Activated CD4-positive, alpha-beta T cell treated with anti-CD3 and anti-CD28 coated beads, Interleukin-2, amount 10 ng/mL, durations not matched to agents 24 days and 14 days (primary cell): ENCODE measurements at regions of chr15 and their contacts with region 1.

Region 1: GRCh38 chr15:64460206-64460734 is at the start of gene ZNF609:
- DNase-seq: peak; percentile 98
- H3K4me3 Mint-ChIP-seq: peak within 1 kb of the TSS; percentile 92
- H3K27ac Mint-ChIP-seq: peak within 1 kb of the TSS; percentile 90
- H3K4me1 Mint-ChIP-seq: peaks cover 60% of the 10 kb centered on the region
- H3K27me3 Mint-ChIP-seq: no peaks in the 10 kb centered on the region
- total RNA-seq, gene ZNF609: 62.4 and 63.9 TPM in 2 replicates

Region 2: DNA sequence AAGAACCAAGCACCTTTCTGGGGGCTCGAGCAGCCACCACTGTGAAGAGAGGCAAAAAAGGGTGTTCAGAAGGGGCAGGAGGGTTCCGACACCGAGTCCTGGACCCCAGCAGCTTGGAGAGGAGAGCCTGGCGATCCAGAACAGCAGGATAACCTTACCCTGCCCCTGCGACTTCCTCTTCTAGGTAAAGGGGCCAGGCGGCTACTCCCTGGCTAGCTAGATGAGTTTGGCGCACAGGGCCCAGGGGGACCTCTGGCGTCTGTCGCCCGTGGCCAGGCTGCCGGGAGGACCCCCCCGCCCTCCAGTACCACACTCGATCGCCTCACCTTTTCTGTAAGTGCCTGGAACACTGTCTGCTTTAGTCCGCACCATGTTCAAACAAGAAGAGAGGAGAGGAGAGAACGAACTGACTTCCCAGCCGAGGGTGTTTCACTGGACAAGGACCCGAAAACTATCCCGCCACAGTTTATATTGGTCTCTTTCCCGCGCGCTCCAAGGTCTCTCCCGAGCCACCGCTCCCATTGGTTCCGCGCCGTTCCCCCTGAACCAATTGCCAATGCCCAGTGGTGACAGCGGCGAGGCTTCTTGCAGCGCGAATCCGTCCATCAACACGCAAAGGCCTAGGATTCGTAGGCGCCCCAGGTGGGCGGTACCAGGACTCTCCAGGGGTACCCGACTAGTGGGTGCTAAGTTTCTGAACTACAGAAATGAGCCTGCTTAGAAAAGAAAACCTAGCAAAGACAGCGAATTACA is 79.1 kb before region 1 on chr15 and contains the start of gene PCLAF:
- intact Hi-C with region 1: loop called (anchors 2 kb)
- DNase-seq: peak; percentile 98
- H3K4me3 Mint-ChIP-seq: peak within 1 kb of the TSS; percentile 89
- H3K27ac Mint-ChIP-seq: peak within 1 kb of the TSS; percentile 86
- H3K4me1 Mint-ChIP-seq: peaks cover 18% of the 10 kb centered on the region
- H3K27me3 Mint-ChIP-seq: no peaks in the 10 kb centered on the region
- total RNA-seq, gene PCLAF: 67.6 and 81.9 TPM in 2 replicates

Region 3: DNA sequence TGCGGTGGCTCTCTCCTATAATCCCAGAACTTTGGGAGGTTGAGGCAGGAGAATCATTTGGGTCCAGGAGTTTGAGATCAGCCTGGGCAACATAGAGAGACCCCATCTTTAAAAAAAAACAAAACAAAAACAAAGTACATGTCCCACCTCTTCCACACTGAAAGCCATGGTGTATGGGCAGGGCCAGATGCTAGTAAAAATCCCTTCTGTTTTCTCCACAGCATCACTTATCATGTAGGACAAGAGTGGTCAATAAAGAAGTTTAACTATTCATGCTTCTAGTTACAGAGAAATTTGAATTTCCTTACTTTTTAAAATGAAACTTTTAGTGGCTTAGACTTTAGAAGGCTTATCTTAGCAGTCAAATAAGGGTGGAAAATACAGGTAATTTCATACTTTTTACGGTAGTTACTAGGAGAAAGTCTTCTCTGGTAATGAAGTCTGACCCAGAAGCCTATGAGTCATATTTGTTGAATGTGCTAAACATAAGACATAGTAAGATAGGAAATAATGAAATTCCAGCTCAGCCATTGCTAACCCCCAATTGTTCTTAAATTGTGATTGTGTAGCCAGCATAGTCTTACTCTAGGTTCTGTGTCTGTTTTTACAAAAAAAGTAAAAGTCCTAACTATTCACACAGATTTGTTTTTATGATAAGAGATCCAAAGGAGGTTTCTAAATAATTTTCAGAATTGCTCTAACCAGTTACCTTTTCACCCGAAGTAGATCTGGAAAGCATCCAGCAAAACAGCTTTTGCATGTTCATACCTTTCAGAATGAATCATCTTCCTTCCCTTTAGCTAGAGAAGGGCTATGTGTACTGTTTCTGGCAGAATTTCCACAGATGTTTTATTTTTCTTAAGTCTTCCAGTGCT is 16.3 kb before region 1 on chr15:
- intact Hi-C with region 1: loop called (anchors 1 kb)
- DNase-seq: peak; percentile 70
- H3K4me3 Mint-ChIP-seq: peak overlapping the region; percentile 76
- H3K27ac Mint-ChIP-seq: peak overlapping the region; percentile 94
- H3K4me1 Mint-ChIP-seq: peaks cover 40% of the 10 kb centered on the region
- H3K27me3 Mint-ChIP-seq: no peaks in the 10 kb centered on the region

Region 4: DNA sequence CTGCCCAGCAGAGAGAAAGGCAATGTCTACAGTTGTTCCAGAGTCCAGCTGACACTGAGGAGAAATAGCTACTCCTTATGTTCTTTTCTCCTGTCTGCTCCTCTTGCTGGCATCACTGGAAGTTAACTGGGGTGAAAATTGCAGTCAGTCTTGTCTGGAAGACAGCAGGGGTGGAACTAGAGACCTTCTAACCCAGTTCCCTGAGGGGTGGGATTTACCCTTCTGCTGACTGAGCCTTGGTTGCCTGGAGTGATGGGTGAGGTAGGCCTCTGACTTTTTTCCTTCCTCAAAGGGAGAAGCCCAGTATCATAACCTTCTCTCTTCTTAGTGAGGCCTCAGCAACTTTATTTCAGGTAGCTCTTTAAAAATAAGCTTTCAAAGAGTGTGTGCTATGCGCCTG is 16.3 kb after region 1 on chr15:
- intact Hi-C with region 1: no loop called
- DNase-seq: no peak
- H3K4me3 Mint-ChIP-seq: no peak overlapping the region
- H3K27ac Mint-ChIP-seq: peak overlapping the region; percentile 17
- H3K4me1 Mint-ChIP-seq: peaks cover 19% of the 10 kb centered on the region
- H3K27me3 Mint-ChIP-seq: no peaks in the 10 kb centered on the region

Region 5: GRCh38 chr15:64536244-64536836 is 76.1 kb after region 1 on chr15:
- intact Hi-C with region 1: loop called (anchors 2 kb)
- DNase-seq: peak; percentile 64
- H3K4me3 Mint-ChIP-seq: peak overlapping the region; percentile 14
- H3K27ac Mint-ChIP-seq: peak overlapping the region; percentile 29
- H3K4me1 Mint-ChIP-seq: peaks cover 37% of the 10 kb centered on the region
- H3K27me3 Mint-ChIP-seq: no peaks in the 10 kb centered on the region

Region 6: DNA sequence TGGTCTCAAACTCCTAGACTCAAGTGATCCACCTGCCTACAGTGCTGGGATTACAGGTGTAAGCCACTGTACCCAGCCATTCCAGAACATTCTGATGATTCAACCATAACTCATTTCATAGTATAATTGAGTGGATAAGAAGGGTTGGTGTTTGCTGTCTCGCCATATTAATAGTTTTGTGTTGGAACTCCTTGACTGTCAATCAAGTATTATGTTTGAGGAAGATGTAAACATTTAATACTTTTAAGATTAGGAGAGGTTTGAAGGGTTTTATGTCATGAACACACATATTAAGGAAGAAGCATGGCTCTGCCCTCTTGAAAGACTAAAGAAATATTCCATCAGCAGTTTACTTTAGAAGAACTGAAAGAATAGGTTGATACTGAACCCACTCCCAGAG is 133.5 kb after region 1 on chr15:
- intact Hi-C with region 1: no loop called
- DNase-seq: no peak
- H3K4me3 Mint-ChIP-seq: no peak overlapping the region
- H3K27ac Mint-ChIP-seq: no peak overlapping the region
- H3K4me1 Mint-ChIP-seq: peaks cover 45% of the 10 kb centered on the region
- H3K27me3 Mint-ChIP-seq: no peaks in the 10 kb centered on the region

Region 7: DNA sequence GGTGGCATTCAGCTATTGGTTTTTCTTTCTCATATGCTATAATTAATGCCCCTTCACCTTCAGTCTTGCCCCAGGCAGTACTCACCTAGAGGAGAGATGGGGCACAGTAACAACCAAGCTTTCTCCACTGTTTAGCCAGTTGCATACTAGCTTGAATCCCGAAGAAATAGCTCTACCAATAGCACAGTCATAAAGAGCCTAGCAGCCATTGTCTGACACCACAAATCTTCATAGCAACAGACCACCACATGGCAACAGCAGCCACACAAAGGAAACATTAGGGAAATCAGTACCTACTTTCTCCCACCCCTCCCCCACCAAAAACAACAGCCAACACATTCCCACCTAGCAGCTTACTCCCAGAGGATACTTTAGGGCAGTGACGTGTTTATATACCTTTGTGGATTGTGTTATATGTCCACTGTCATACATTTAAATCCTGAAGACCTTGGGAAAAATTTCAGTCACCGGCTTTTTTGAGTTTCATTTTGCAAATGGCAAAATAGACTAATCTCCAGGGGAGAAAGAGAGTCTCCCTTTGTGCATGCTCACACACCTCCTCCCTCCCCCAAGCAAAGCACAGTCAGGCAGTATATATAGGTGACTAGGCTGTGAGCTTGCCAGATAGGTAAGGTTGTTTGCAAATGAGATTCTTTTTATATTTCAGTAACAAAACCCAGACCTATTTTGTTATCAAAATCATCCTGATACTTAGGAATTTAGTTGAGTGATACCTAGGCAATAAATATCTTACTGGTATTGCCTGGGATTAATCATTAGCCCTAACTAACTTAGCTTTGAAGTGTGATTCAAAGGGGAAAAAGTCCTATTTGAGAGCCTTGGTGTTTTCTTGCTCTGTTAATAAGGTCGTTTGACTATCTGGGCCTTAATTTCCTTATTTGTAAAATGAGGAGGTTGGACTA is 174.6 kb after region 1 on chr15:
- intact Hi-C with region 1: loop called (anchors 2 kb)
- DNase-seq: peak; percentile 80
- H3K4me3 Mint-ChIP-seq: peak overlapping the region; percentile 59
- H3K27ac Mint-ChIP-seq: peak overlapping the region; percentile 84
- H3K4me1 Mint-ChIP-seq: peaks cover 48% of the 10 kb centered on the region
- H3K27me3 Mint-ChIP-seq: no peaks in the 10 kb centered on the region